ENCODE measurements at regions of chr3 and their contacts with region 1.

Region 1: DNA sequence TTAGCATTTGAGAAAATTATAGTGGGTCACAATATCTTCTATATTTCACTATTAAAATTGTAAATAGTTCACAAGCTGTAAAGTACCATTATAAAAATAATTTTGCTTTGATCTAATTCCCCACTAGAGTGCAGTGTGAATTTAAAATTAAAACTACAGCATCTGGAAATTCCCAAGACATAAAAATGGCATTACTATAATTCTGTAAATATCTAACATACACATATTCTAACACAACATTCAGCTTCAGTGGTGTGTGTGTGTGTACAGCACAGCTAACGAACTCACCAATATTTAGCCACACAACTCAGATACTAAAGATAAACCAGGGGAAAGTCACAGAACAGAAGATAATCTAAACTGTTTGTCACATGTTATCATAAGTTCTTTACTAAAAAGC is 424.9 kb upstream of the ZNF385D start:
- DNase-seq: peak; percentile 11
- H3K4me3 ChIP-seq: no peak overlapping the region
- H3K27ac ChIP-seq: peak overlapping the region in 1 of 2 experiments; percentile 60; a peak in 2 of 4 replicates
- H3K4me1 ChIP-seq: no peaks in the 10 kb centered on the region; a peak in 2 of 4 replicates
- H3K27me3 ChIP-seq: no peaks in the 10 kb centered on the region
- CTCF ChIP-seq: peak; percentile 59
- EP300 ChIP-seq: no peak
- RAD21 ChIP-seq: peak; percentile 73

Region 2: DNA sequence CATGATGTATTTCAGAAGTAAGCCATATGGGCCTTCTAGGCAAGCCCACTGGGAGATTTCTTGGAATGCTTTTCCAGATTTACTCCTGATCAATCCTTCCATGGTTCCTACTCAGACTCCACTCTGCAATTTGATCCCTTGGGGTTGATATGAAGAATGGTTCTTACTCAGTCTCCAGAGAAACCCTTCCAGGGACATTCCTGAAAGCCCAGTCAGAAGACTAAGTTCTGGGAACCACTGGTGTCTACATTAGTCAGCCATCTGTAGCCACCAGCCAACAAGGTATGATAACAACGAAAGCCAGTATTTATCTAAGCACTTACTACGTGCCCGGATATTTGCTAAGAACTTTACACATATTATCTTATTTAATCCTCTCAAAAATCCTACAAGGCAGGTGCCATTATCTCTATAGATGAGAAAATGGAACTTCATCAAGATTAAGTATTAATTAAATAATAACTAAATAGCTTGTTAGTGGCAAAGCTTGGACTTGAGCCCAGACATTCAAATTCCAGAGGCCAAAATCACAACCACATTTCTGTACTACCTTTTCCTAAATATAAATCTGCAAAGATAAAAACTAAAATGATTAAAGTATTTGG is 457.7 kb before region 1 on chr3:
- CTCF ChIA-PET with region 1: no interaction called
- POLR2A ChIA-PET with region 1: no interaction called
- DNase-seq: no peak
- H3K4me3 ChIP-seq: no peak overlapping the region
- H3K27ac ChIP-seq: peak overlapping the region; percentile 53 to 92; a peak in 3 of 4 replicates
- H3K4me1 ChIP-seq: peaks cover 0 to 10% of the 10 kb centered on the region in 2 experiments; a peak in 2 of 4 replicates
- H3K27me3 ChIP-seq: no peaks in the 10 kb centered on the region
- CTCF ChIP-seq: no peak
- EP300 ChIP-seq: peak in 1 of 2 experiments; percentile 91; a peak in 3 of 4 replicates
- RAD21 ChIP-seq: no peak

Region 3: DNA sequence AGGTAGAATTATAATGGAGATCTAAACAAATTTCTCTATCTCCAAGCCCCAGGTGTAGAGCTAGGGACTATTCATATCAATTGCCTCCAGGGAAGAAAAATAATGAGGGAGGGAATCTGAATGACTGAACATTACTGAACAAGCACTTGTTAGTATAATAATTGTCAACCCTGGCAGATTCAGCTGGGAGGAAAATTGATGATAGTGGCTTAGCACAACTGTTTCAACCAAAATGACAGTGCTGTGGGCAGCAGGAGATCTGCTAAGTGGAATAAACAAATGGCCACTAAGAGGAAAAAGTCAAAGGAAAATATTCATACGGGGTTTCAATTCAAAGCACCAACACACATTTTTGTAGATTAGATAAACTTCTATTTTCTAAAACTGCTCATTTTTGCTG is 130.1 kb before region 1 on chr3:
- CTCF ChIA-PET with region 1: no interaction called
- POLR2A ChIA-PET with region 1: no interaction called
- DNase-seq: no peak
- H3K4me3 ChIP-seq: no peak overlapping the region
- H3K27ac ChIP-seq: no peak overlapping the region
- H3K4me1 ChIP-seq: no peaks in the 10 kb centered on the region
- H3K27me3 ChIP-seq: no peaks in the 10 kb centered on the region
- CTCF ChIP-seq: no peak
- EP300 ChIP-seq: no peak
- RAD21 ChIP-seq: no peak

Region 4: DNA sequence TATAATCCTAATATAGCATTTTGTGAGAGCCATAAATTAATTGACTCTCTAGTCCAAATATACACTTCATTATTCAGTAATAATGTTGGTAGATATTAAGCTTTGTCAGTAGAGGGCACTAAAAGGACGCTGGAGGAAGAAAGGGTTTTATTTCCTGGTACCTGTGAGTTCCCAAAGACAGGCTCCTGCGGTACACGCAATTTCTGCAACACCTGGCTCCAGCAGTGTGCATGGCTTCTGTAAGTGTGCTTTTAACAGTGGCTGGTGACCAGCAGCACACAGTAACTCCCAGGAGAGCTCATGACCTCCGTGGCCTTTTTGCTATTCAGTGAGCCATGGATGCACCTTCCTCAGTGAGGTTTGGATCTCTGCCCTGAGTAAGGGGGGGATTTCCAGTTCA is 86.7 kb before region 1 on chr3:
- CTCF ChIA-PET with region 1: no interaction called
- POLR2A ChIA-PET with region 1: no interaction called
- DNase-seq: peak; percentile 6
- H3K4me3 ChIP-seq: no peak overlapping the region
- H3K27ac ChIP-seq: no peak overlapping the region
- H3K4me1 ChIP-seq: no peaks in the 10 kb centered on the region; a peak in 1 of 4 replicates
- H3K27me3 ChIP-seq: no peaks in the 10 kb centered on the region
- CTCF ChIP-seq: peak; percentile 59
- EP300 ChIP-seq: no peak
- RAD21 ChIP-seq: peak; percentile 76

Region 5: DNA sequence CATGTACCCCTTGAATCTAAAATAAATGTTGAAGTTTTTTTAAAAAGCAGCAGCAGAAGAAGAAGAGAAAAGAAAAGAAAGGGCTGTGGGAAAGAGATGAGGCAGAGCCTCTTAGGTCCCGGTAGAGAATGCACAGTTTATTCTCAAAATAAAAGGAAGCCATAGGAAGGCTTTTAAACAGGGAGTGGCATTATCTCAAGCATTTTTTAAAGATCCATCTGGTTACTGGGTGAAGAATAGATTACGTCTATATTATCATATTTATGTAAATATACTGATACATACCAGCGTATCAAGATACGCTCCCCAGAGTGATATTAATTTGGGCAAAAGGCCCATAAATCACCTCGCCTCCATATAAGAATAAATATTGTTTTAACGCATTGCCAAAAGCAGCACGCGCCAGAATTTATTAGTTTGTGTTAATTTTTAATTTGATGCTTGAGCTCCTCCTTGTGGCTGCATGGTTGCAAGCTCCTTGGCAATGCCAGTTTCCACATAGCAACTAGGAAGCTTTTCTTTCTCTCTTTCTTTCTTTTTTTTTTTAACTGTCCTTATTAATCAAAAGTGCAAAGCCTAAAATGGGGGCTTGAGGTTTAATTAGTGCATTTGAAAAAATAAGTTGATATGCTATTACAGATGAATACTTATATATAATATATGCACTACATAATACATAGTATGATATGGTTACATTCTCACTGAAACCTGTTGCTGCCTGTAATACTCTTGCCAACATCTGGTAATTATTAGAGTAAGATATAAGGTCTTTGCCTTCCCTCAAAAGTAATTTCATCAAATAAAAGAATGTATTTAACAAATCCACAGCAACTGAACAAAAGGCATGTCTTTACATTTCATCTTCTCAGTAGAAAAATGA is 784.4 kb after region 1 on chr3:
- CTCF ChIA-PET with region 1: interaction called, 20 read pairs
- POLR2A ChIA-PET with region 1: no interaction called
- DNase-seq: peak; percentile 34
- H3K4me3 ChIP-seq: peak overlapping the region in 1 of 2 experiments; percentile 17; a peak in 1 of 4 replicates
- H3K27ac ChIP-seq: no peak overlapping the region
- H3K4me1 ChIP-seq: no peaks in the 10 kb centered on the region
- H3K27me3 ChIP-seq: no peaks in the 10 kb centered on the region
- CTCF ChIP-seq: peak; percentile 85
- EP300 ChIP-seq: no peak
- RAD21 ChIP-seq: peak; percentile 86